ENCODE measurements at regions of chr7 and their contacts with region 1.

Region 1: DNA sequence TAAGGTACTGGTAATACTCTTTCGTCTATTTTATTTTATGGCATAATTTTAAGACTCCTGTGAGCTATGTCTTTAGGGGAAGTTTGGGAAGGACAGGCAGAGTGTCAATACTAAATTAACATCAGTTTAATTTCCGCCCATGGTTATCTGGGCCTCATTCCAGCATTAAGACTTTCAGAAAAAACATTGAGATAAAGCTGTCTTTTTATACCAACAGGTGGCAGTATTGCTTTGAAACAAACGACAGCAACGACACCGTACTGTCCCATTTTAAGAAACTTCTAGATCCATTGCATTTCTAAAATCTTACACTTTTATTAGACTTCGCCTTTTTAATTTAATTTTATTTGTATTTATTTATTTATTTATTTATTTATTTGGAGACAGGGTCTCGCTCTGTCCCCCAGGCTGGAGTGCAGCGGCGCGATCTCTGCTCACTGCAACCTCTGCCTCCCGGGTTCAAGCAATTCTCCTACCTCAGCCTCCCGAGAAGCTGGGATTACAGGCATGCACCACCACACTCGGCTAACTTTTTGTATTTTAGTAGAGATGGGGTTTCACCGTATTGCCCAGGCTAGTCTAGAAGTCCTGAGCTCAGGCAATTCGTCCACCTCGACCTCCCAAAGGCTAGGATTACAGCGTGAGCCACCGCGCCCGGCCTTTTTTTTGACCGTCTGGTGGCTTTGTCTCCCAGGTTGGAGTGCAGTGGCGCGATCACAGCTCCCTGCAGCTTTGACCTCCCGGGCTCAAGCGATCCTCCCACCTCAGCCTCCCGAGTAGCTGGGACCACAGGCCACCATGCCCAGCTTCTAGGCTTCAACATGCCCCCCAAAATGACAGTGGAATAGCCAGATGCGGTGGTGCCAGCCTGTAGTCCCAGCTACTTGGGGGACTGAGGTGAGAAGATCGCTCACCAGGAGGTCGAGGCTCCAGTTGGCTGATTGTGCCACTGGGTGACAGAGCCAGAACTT is 78.7 kb upstream of the C1GALT1 start:
- DNase-seq: peak; percentile 15
- H3K4me3 ChIP-seq: no peak overlapping the region
- H3K27me3 ChIP-seq: no peaks in the 10 kb centered on the region
- CTCF ChIP-seq: peak; percentile 60

Region 2: GRCh38 chr7:7114706-7115295 is 11.2 kb after region 1 on chr7:
- CTCF ChIA-PET with region 1: interaction called, 15 read pairs
- POLR2A ChIA-PET with region 1: no interaction called
- DNase-seq: no peak
- H3K4me3 ChIP-seq: no peak overlapping the region
- H3K27me3 ChIP-seq: no peaks in the 10 kb centered on the region
- CTCF ChIP-seq: no peak

Region 3: DNA sequence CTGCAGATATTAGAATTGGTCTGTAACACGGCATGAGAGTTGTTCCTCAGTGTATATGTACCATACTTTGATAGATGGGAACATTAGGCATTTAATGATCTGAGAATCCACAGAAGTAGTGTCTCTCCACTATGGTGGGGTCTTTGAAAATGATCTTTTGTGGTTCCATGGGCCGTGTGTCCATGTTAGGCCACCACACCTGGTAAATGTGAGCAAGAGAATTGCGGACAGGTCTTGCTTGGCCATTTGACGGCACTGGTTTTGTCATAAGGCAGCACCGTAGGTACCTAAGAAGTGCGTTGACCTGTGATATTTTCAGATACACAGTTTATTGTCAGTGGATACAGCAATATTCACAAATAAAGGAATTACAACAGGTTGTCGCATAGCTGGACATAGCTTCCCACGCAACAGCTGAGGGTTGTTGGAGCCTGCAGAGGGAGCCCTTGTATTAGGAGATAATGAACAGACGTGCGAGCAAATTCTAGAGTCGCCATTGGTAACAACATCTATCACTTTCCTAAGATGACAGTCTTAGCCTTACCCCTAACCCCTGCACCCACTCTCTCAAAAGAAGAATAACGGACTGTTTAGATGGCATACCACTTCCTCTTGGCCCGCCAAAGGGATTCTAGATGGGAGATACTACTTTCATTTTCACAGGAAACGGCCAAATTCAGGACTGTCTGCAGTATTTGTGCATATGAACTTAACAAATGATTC is 320.7 kb after region 1 on chr7:
- CTCF ChIA-PET with region 1: interaction called, 55 read pairs
- POLR2A ChIA-PET with region 1: no interaction called
- DNase-seq: no peak
- H3K4me3 ChIP-seq: peak overlapping the region; percentile 41
- H3K27me3 ChIP-seq: no peaks in the 10 kb centered on the region
- CTCF ChIP-seq: peak; percentile 89

Region 4: DNA sequence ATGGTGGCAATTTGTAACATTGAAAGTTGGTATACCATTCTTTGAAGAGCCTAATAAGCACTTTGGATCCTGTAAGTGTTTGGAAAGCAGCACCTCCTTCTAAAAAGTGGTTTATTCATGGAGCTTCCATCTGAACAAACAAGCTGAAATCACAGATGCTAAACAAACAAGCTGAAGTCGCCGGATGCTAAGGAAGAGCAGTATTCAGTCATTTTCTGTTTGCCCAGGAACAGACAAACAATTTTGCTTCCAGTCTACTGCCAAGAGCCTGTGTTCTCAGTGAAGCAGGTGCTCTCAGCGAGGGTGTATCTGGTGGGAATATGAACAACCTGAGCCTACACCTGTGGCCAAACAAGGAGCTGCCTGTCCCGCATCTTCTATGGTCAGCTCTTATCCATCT is 425.7 kb after region 1 on chr7:
- CTCF ChIA-PET with region 1: no interaction called
- POLR2A ChIA-PET with region 1: interaction called, 13 read pairs
- DNase-seq: no peak
- H3K4me3 ChIP-seq: no peak overlapping the region
- H3K27me3 ChIP-seq: no peaks in the 10 kb centered on the region
- CTCF ChIP-seq: no peak

Region 5: GRCh38 chr7:7542251-7542835 is 438.7 kb after region 1 on chr7:
- CTCF ChIA-PET with region 1: interaction called, 10 read pairs
- POLR2A ChIA-PET with region 1: no interaction called
- DNase-seq: no peak
- H3K4me3 ChIP-seq: no peak overlapping the region
- H3K27me3 ChIP-seq: no peaks in the 10 kb centered on the region
- CTCF ChIP-seq: no peak